Mucosa of descending colon (tissue), 3 donors: ENCODE measurements at regions of chr17 and their contacts with region 1.

Region 1: GRCh38 chr17:48463526-48463925 is 33.5 kb upstream of the SKAP1 start:
- DNase-seq: no peak
- ATAC-seq: no peak
- H3K4me3 ChIP-seq: no peak overlapping the region
- H3K4me1 ChIP-seq: no peaks in the 10 kb centered on the region
- CTCF ChIP-seq: no peak

Region 2: GRCh38 chr17:48344246-48344645 is 119.3 kb before region 1 on chr17:
- intact Hi-C with region 1: loop called in 1 of 2 experiments (anchors 10 kb)
- DNase-seq: no peak
- ATAC-seq: no peak
- H3K4me3 ChIP-seq: no peak overlapping the region
- H3K4me1 ChIP-seq: no peaks in the 10 kb centered on the region
- CTCF ChIP-seq: no peak